Transverse colon (tissue), 4 donors: ENCODE measurements at regions of chr10 and their contacts with region 1.

Region 1: GRCh38 chr10:87861953-87862678 is 1.2 kb downstream of the KLLN start:
- DNase-seq: peak; percentile 98
- H3K4me3 ChIP-seq: peak overlapping the region; percentile 69 to 97 (median 76)
- H3K27ac ChIP-seq: peak overlapping the region; percentile 93 to 100 (median 98)
- H3K4me1 ChIP-seq: peaks cover 0 to 17% (median 12%) of the 10 kb centered on the region in 4 donors
- H3K27me3 ChIP-seq: no peaks in the 10 kb centered on the region
- CTCF ChIP-seq: peak in 1 of 5 experiments; percentile 24
- EP300 ChIP-seq: peak; percentile 3
- POLR2A ChIP-seq: peak; percentile 67

Region 2: DNA sequence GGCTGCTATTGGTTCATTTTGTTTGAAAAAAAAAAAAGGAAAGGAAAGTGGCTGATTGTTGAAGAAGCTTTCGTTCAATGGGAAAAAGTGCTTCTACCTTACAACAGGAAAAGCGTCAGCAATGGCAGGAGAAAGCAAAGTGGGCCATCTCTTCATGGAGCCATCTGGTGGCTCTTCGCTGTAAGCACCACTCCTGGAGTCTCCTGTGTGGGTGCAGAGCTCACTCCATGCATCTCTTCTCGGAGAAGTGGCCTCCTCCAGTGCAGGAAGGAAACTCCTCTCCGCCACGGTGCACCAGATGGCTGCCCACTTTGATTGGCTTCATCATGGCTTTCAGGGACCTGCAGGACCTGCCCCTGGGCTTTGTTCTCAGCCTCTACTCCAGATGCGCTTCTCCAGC is 252.3 kb after region 1 on chr10:
- in situ Hi-C with region 1: loop called in 1 of 4 experiments (anchors 25 kb)
- intact Hi-C with region 1: loop called (anchors 10 kb)
- DNase-seq: peak; percentile 29
- H3K4me3 ChIP-seq: no peak overlapping the region
- H3K27ac ChIP-seq: no peak overlapping the region
- H3K4me1 ChIP-seq: peaks cover 0 to 21% (median 2%) of the 10 kb centered on the region in 4 donors
- H3K27me3 ChIP-seq: no peaks in the 10 kb centered on the region
- CTCF ChIP-seq: peak in 4 of 5 experiments; percentile 22 to 35 (median 30)
- EP300 ChIP-seq: no peak
- POLR2A ChIP-seq: no peak

Region 3: GRCh38 chr10:88138319-88138848 is 276.3 kb after region 1 on chr10:
- in situ Hi-C with region 1: loop called in 1 of 4 experiments (anchors 25 kb)
- intact Hi-C with region 1: no loop called
- DNase-seq: no peak
- H3K4me3 ChIP-seq: no peak overlapping the region
- H3K27ac ChIP-seq: peak overlapping the region in 1 of 4 donors; percentile 49
- H3K4me1 ChIP-seq: peaks cover 0 to 7% (median 2%) of the 10 kb centered on the region in 4 donors
- H3K27me3 ChIP-seq: no peaks in the 10 kb centered on the region
- CTCF ChIP-seq: no peak
- EP300 ChIP-seq: no peak
- POLR2A ChIP-seq: no peak

Region 4: DNA sequence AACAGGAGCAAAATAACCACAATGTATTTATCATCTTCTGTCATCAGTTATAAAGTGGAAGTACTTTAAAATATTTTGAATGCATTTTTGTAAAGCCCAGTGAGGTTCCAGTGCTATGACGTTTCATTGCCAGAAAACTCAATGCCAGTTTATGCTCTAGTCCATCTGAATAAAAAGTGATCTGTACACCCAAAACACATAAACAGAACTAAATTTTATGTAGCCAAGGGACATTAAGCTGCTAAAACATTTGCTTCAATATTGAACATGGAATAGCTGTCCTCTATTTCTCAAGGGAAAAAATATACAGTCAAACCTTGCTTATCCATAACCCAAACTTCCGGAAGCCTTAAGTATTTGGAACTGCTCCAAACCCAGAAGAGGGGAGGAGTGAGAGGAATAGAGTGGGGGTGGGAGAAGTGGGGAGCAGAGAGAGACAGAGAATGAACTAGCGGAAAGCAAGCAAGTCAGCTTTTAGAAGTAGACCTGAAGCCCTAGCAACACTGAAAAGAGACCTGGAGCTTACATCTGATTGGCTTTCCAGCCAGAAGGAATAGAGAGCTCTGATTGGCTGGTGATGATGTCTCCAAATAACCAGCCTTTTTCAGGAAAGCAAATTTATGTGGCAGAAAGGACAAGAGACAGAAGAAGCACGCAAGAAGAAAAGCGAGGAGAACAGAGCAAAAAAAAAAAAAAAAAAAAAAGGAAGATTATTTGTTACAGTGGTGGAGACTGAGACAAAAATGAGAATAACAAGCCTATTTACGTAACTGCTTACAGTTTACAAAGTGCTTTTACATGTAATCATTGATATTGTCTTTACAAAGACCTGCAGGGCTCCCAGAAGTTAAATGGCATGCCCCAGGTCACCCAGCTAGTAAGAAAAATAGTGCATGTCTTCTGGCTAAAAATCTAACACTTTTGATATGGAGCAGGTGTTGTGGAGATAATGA is 525.0 kb after region 1 on chr10:
- in situ Hi-C with region 1: loop called (anchors 10 to 25 kb)
- intact Hi-C with region 1: no loop called
- DNase-seq: peak; percentile 40
- H3K4me3 ChIP-seq: peak overlapping the region in 2 of 4 donors; percentile 5 to 25
- H3K27ac ChIP-seq: peak overlapping the region; percentile 80 to 88 (median 86)
- H3K4me1 ChIP-seq: peaks cover 20 to 59% (median 37%) of the 10 kb centered on the region in 4 donors
- H3K27me3 ChIP-seq: no peaks in the 10 kb centered on the region
- CTCF ChIP-seq: no peak
- EP300 ChIP-seq: no peak
- POLR2A ChIP-seq: peak; percentile 43